Activated naive CD4-positive, alpha-beta T cell treated with anti-CD3 and anti-CD28 coated beads for 36 hours (primary cell): ENCODE measurements at regions of chr6 and their contacts with region 1.

Region 1: GRCh38 chr6:149094156-149094555 is 223.4 kb upstream of the TAB2 start:
- DNase-seq: peak; percentile 31
- H3K4me3 Mint-ChIP-seq: no peak overlapping the region
- H3K27ac Mint-ChIP-seq: peak overlapping the region; percentile 80
- H3K4me1 Mint-ChIP-seq: peaks cover 40% of the 10 kb centered on the region
- H3K27me3 Mint-ChIP-seq: no peaks in the 10 kb centered on the region

Region 2: GRCh38 chr6:148854096-148854495 is 240.1 kb before region 1 on chr6:
- CTCF ChIA-PET with region 1: no interaction called
- intact Hi-C with region 1: no loop called
- DNase-seq: no peak
- H3K4me3 Mint-ChIP-seq: no peak overlapping the region
- H3K27ac Mint-ChIP-seq: no peak overlapping the region
- H3K4me1 Mint-ChIP-seq: no peaks in the 10 kb centered on the region
- H3K27me3 Mint-ChIP-seq: peaks cover 8% of the 10 kb centered on the region

Region 3: GRCh38 chr6:149082286-149082707 is 11.9 kb before region 1 on chr6:
- CTCF ChIA-PET with region 1: interaction called, 15 read pairs
- intact Hi-C with region 1: loop called (anchors 1 kb)
- DNase-seq: peak; percentile 97
- H3K4me3 Mint-ChIP-seq: no peak overlapping the region
- H3K27ac Mint-ChIP-seq: peak overlapping the region; percentile 41
- H3K4me1 Mint-ChIP-seq: peaks cover 54% of the 10 kb centered on the region
- H3K27me3 Mint-ChIP-seq: no peaks in the 10 kb centered on the region

Region 4: DNA sequence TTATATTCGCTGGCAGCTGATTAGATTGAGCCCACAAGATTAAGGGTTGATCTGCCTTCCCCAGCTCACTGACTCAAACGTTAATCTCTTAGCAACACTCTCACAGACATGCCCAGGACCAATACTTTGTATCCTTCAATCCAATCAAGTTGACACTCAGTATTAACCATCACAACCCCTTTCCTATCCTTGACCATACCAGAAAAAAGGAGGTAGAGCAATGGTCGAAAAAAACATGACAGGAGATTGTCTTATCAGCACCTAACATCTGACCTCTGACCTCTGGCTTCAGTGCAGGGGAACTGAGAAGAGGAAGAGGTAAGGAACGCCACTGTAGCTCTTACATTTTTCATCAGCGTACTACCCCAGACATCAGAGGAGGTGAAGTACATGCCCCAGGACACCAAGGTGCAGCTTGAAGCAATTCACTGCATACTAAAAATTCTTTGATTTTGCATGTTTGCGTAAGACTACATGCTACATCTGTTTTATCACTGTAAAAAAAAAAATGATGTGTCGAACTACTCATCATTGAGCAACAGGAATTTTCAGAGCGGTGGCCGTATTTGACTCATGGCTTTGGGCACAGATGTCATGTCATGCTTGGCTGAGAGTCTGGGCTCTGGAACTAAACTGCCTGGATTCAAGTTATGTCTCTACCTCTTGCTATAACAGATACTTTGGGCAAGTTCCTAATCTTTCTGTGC is 35.4 kb after region 1 on chr6:
- CTCF ChIA-PET with region 1: interaction called, 4 read pairs
- intact Hi-C with region 1: loop called (anchors 2 kb)
- DNase-seq: peak; percentile 56
- H3K4me3 Mint-ChIP-seq: no peak overlapping the region
- H3K27ac Mint-ChIP-seq: peak overlapping the region; percentile 83
- H3K4me1 Mint-ChIP-seq: peaks cover 51% of the 10 kb centered on the region
- H3K27me3 Mint-ChIP-seq: no peaks in the 10 kb centered on the region

Region 5: GRCh38 chr6:149147938-149148718 is 54.0 kb after region 1 on chr6:
- CTCF ChIA-PET with region 1: interaction called, 3 read pairs
- intact Hi-C with region 1: loop called (anchors 2 kb)
- DNase-seq: peak; percentile 27
- H3K4me3 Mint-ChIP-seq: no peak overlapping the region
- H3K27ac Mint-ChIP-seq: peak overlapping the region; percentile 56
- H3K4me1 Mint-ChIP-seq: peaks cover 58% of the 10 kb centered on the region
- H3K27me3 Mint-ChIP-seq: no peaks in the 10 kb centered on the region

Region 6: GRCh38 chr6:149614337-149614736 is 520.2 kb after region 1 on chr6:
- CTCF ChIA-PET with region 1: no interaction called
- intact Hi-C with region 1: no loop called
- DNase-seq: no peak
- H3K4me3 Mint-ChIP-seq: no peak overlapping the region
- H3K27ac Mint-ChIP-seq: no peak overlapping the region
- H3K4me1 Mint-ChIP-seq: peaks cover 9% of the 10 kb centered on the region
- H3K27me3 Mint-ChIP-seq: no peaks in the 10 kb centered on the region